Gastrocnemius medialis (tissue), 4 donors: ENCODE measurements at regions of chr1 and their contacts with region 1.

Region 1: DNA sequence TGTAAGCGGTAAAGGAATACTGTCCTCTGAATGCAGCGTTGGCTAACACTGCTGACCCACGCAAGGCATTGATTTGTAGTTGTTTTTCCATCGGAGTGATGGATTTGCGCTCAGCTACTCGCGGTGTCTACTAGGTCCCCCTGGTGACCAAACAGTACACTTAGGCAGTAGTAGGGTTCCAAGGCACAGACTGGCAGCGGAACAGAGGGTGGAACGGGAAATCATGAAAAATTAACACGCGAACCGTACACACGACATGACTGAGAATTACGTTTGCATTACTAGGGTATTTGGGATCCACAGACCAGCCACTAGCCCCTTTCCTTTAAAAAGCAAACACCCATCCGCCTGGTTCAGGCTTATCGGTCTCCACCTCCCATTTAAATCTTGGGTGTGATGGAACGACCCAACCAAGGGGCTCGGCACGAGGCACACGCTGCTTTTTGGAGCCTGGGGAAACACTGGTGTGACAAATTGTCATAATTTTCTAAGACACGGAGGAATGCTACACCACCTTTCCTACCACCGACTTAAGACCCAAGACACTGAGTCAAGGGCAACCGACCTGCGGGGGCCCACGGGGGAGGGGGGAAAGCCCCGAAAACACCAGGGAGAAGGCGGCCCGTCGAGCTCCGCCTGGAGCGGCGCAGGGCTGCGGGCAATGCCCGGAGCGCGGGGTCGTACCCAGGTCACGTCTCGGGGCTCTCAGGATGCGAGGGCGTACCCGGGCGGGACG is 699 bp downstream of the DIPK1A start:
- DNase-seq: peak; percentile 53 to 66
- ATAC-seq: peak; percentile 71 to 73
- H3K4me3 ChIP-seq: peak overlapping the region; percentile 77 to 94 (median 84)
- H3K27ac ChIP-seq: peak overlapping the region; percentile 84 to 92 (median 90)
- H3K4me1 ChIP-seq: peaks cover 19 to 23% of the 10 kb centered on the region in 2 donors
- H3K27me3 ChIP-seq: no peaks in the 10 kb centered on the region
- CTCF ChIP-seq: peak; percentile 47 to 71 (median 58)
- POLR2A ChIP-seq: peak in 1 of 2 donors; percentile 21

Region 2: GRCh38 chr1:92858564-92859399 is 101.8 kb before region 1 on chr1:
- in situ Hi-C with region 1: no loop called
- intact Hi-C with region 1: loop called (anchors 1 kb)
- DNase-seq: peak; percentile 18 to 27
- ATAC-seq: peak; percentile 87 to 92
- H3K4me3 ChIP-seq: peak overlapping the region; percentile 26 to 46 (median 40)
- H3K27ac ChIP-seq: peak overlapping the region; percentile 53 to 66 (median 60)
- H3K4me1 ChIP-seq: peaks cover 11 to 13% of the 10 kb centered on the region in 2 donors
- H3K27me3 ChIP-seq: no peaks in the 10 kb centered on the region
- CTCF ChIP-seq: peak; percentile 89 to 98 (median 90)
- POLR2A ChIP-seq: no peak

Region 3: DNA sequence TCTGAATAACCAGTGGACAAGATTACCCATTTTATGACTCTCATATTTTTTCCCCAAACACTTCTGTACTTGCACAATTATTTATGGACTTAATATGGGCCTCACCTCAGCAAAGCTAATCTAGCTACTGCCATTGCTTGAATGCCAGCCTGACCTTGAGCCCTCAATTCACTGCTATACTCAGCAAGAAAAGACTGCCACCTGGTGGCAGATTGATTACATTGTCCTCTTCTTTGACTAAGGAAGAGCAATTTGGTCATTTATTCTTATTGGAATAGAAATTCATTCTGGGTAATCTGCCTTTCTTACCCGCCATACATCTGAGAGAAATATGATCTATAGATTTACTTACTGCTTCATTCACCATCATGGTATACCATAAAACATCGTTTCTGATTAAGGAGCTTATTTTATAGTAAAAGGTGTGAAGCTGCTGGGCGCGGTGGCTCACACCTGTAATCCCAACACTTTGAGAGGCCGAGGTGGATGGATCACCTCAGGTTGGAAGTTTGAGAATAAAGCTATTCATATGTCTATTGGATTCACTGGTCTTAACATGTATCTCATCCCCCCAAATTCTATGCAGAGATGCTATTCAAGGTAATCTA is 33.6 kb after region 1 on chr1:
- in situ Hi-C with region 1: no loop called
- intact Hi-C with region 1: loop called (anchors 1 kb)
- DNase-seq: peak; percentile 55 to 56
- ATAC-seq: peak; percentile 91 to 98
- H3K4me3 ChIP-seq: no peak overlapping the region
- H3K27ac ChIP-seq: no peak overlapping the region
- H3K4me1 ChIP-seq: no peaks in the 10 kb centered on the region
- H3K27me3 ChIP-seq: no peaks in the 10 kb centered on the region
- CTCF ChIP-seq: peak; percentile 85 to 90 (median 89)
- POLR2A ChIP-seq: no peak

Region 4: DNA sequence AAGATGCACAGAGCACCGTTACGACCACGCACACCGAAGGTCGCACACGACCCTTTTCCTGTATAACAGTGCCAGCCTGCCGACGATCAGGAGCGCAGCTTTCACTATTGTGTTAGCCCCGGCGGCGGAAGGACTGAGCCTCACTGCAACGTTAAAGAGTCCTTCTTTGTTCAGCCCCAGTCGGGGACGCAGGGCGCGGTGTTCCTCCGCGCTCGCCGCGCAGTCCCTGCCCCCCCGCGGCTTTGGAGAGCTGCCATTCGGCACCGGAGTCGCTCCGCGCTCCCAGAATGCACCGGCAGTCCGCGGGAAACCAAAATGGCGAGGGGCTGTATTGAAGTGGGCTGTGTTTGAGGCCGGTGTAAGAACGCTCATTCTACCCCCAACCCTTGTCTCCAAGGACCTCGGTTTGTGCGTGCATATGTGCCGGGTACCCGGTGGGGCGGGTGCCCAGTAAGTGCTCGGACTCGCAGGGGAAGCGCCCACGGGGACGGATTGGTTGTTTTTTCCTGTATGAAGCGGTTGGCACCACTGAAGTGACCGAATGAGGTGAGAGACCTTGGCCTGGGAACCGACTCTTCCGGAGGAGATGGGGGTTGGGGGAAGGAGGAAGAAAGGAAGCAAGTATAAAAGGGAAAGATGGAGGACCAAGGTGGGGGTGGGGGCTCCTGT is 118.6 kb after region 1 on chr1 and contains the start of gene MTF2:
- in situ Hi-C with region 1: no loop called
- intact Hi-C with region 1: loop called (anchors 2 kb)
- DNase-seq: peak; percentile 86 to 91
- ATAC-seq: peak; percentile 92 to 94
- H3K4me3 ChIP-seq: peak within 1 kb of the TSS; percentile 74 to 96 (median 96)
- H3K27ac ChIP-seq: peak within 1 kb of the TSS; percentile 83 to 90 (median 89)
- H3K4me1 ChIP-seq: peaks cover 23 to 26% of the 10 kb centered on the region in 2 donors
- H3K27me3 ChIP-seq: no peaks in the 10 kb centered on the region
- CTCF ChIP-seq: no peak
- POLR2A ChIP-seq: peak; percentile 57 to 67
- total RNA-seq, gene MTF2: 5.9 to 11.7 (median 9.5) TPM

Region 5: GRCh38 chr1:93164816-93165215 is 204.3 kb after region 1 on chr1:
- in situ Hi-C with region 1: no loop called
- intact Hi-C with region 1: no loop called
- DNase-seq: peak in 1 of 2 donors; percentile 28
- ATAC-seq: peak; percentile 60 to 76
- H3K4me3 ChIP-seq: no peak overlapping the region
- H3K27ac ChIP-seq: peak overlapping the region; percentile 65 to 82 (median 75)
- H3K4me1 ChIP-seq: peaks cover 29 to 41% of the 10 kb centered on the region in 2 donors
- H3K27me3 ChIP-seq: no peaks in the 10 kb centered on the region
- CTCF ChIP-seq: no peak
- POLR2A ChIP-seq: no peak